GM10248 (cell line): ENCODE measurements at regions of chr19 and their contacts with region 1.

Region 1: DNA sequence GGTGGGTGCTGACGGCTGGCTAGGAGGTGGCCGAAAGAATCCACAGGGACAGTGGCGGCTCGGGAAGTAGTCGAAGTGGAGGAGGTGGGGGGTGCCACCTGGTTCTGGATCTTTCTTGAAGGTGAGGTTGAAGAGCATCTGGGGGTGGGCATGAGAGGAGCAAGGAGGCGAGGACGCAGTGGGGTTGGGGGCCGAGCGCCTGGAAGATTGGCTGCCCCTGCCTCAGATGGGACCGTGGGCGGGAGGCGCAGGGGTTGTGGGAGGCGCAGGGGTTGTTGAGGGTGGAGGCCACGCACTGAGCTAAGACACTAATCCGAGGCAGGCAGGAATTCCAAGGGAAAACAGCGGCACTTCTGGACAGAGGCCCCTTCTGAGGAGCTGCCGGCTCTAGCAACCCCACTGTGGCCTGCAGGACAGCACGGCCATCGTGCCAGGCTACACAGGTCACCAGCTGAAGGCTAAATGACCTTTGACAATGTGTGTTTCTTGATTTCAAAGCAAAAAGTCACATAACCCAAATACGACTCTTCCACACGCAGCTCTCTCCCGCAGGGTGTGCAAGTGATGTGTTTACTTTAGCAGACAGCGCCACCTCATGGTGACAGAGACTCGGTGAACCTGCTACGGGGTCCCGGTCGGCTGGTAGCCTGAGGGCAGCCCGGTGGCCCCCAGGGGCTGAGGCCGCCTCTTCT is 44.1 kb upstream of the RANBP3 start:
- DNase-seq: peak; percentile 88
- CTCF ChIP-seq: peak; percentile 85

Region 2: GRCh38 chr19:5790573-5791520 is 231.2 kb before region 1 on chr19 and contains the start of gene DUS3L:
- CTCF ChIA-PET with region 1: interaction called, 12 read pairs
- POLR2A ChIA-PET with region 1: no interaction called
- DNase-seq: peak; percentile 98
- CTCF ChIP-seq: no peak

Region 3: GRCh38 chr19:5904352-5905113 is 117.5 kb before region 1 on chr19 and contains the start of gene VMAC:
- CTCF ChIA-PET with region 1: interaction called, 10 read pairs
- POLR2A ChIA-PET with region 1: no interaction called
- DNase-seq: peak; percentile 99
- CTCF ChIP-seq: no peak

Region 4: DNA sequence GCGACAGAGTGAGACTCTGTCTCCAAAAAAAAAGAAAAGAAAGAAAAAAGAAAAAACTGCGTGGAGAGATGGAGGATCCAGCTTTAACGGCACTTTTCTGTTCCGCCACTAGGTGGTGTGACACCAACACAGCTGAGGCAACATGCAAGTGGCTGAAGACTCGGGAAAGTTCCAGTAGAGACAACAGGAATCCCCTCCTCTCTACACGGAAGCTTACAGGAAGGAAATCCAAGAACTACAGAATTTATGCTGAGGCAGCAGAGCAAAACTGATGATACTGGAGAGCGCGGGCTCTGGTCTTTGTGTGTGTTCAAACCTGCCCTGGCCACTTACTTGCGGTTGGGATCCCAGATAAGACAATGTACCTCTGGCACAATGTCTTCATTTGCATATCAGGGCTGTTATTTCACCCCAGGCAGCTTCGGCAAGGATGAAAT is 54.0 kb before region 1 on chr19:
- CTCF ChIA-PET with region 1: interaction called, 66 read pairs
- POLR2A ChIA-PET with region 1: no interaction called
- DNase-seq: peak; percentile 77
- CTCF ChIP-seq: peak; percentile 90

Region 5: GRCh38 chr19:5987077-5987818 is 34.8 kb before region 1 on chr19:
- CTCF ChIA-PET with region 1: interaction called, 70 read pairs
- POLR2A ChIA-PET with region 1: no interaction called
- DNase-seq: peak; percentile 79
- CTCF ChIP-seq: peak; percentile 94

Region 6: DNA sequence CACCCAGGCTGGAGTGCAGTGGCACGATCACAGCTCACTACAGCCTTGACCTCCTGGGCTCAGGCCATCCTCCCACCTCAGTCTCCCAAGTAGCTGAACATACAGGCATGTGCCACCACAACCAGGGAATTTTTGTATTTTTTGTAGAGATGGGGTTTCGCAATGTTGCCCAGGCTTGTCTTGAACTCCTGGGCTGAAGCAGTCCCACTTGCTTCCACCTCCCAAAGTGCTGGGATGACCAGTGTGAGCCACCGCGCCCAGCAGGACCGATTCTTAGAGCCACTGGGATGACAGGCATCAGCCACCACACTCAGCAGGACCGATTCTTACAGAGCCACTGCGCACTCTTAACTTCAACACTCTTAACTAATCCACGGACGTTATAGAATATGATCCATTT is 10.8 kb after region 1 on chr19:
- CTCF ChIA-PET with region 1: interaction called, 39 read pairs
- POLR2A ChIA-PET with region 1: no interaction called
- DNase-seq: no peak
- CTCF ChIP-seq: no peak

Region 7: DNA sequence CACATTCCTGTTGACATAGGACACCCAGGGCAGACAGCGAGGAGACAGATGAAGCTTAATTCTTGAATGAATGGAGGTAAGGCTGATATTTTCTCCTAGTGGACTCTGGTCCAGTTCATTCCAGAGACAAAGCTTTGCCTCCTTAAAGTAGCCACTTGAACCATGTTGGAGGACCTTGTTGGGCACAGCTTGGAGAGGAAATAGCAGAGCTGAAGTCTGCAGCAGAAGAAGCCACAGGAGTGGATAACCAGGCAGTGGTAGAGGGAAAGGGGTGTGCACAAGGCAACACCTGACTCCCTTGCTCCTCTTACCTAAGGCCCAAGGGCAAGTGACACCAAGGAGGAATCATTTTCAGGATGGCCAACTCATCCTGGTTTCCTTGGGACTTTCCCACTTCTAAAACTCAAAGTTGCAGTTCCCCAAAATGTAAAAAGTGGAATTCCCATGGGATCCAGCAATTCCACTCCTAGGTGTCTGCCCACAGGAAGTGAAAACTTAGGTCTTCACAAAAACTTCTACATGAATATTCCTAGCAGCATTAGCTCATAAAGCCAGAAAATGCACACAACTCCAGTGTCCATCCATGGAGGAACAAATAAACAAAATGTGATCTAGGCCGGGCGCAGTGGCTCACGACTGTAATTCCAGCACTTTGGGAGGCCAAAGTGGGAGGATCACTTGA is 94.9 kb after region 1 on chr19:
- CTCF ChIA-PET with region 1: interaction called, 12 read pairs
- POLR2A ChIA-PET with region 1: no interaction called
- DNase-seq: no peak
- CTCF ChIP-seq: no peak